ENCODE measurements at regions of chr3 and their contacts with region 1.

Region 1: DNA sequence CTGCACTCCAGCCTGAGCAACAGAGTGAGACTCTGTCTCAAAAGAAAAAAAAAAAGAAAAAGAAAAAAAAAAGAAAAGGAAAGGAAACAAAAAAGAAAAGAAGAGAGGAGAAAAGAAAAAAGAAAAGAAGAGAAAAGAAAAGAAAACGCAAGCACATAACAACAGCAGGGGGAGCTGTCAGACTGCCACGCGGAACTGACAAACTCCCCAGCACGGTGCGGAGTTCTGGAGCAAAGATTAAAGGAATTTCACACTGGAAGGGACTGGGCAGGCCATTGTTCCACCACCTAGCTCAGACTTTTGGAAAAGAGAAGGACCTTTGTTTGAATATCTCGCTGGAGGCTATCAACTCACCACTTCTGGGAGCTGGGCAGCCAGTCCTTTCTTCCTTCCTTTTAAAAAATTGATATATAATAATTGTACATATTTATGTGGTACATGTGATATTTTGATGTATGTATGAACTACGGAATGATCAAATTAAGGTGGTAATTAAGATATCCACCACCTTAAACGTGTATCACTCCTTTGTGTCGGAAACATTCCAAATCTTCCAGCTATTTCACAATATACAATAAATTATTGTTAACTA is 40.5 kb downstream of the DPPA2 start:
- DNase-seq: no peak
- ATAC-seq: no peak
- H3K4me3 ChIP-seq: no peak overlapping the region
- H3K27ac ChIP-seq: no peak overlapping the region
- H3K4me1 ChIP-seq: peaks cover 0 to 5% (median 0%) of the 10 kb centered on the region in 12 donors
- H3K27me3 ChIP-seq: no peaks in the 10 kb centered on the region
- CTCF ChIP-seq: peak; percentile 10 to 65 (median 39)
- POLR2A ChIP-seq: no peak

Region 2: DNA sequence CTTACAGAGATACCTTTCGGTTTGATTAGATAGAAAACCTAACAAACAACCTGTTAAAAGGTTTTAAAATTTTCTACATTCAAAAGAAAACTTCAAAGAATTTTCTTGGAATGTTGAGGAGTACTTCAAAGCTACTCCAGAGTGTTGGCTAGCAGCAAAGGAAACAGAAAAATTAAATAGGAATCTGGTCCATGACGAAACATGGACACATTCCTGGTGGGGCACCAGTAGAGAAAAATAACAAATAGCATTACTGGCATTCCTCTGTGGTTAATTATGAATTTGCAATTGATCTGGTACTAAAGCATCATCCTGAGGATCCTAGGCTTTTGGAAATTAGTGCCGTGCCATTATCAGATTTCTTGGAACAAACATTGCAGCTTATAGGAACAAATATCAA is 121.0 kb after region 1 on chr3:
- intact Hi-C with region 1: loop called in 1 of 10 experiments (anchors 10 kb)
- DNase-seq: no peak
- ATAC-seq: no peak
- H3K4me3 ChIP-seq: no peak overlapping the region
- H3K27ac ChIP-seq: no peak overlapping the region
- H3K4me1 ChIP-seq: no peaks in the 10 kb centered on the region
- H3K27me3 ChIP-seq: no peaks in the 10 kb centered on the region
- CTCF ChIP-seq: no peak
- POLR2A ChIP-seq: no peak

Measured in heart left ventricle (tissue), 16 donors.